ENCODE measurements at regions of chr1 and their contacts with region 1.

Region 1: DNA sequence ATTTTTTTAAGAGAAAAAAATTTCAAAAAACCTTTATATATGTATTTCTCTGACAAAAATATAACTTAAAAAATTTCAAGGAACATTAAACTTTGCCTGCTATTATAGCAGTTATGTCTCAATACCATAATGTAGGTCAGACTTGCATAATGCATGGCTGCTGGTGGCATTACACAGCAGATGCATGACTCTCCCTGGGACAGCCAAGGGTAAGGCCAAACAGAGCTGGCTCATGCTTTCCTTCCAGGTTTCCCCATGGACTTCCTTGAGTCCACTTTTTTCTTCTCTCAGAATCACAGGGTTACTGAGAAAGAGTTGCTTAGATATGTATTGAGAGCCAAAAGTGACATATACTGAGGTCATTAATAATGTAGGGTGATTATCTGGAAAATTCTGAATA is 43.7 kb downstream of the RHOU start:
- DNase-seq: no peak
- H3K4me3 ChIP-seq: no peak overlapping the region
- H3K27ac ChIP-seq: no peak overlapping the region
- H3K4me1 ChIP-seq: peaks cover 5 to 10% (median 10%) of the 10 kb centered on the region in 4 donors
- H3K27me3 ChIP-seq: no peaks in the 10 kb centered on the region
- CTCF ChIP-seq: no peak
- EP300 ChIP-seq: no peak
- POLR2A ChIP-seq: no peak

Region 2: DNA sequence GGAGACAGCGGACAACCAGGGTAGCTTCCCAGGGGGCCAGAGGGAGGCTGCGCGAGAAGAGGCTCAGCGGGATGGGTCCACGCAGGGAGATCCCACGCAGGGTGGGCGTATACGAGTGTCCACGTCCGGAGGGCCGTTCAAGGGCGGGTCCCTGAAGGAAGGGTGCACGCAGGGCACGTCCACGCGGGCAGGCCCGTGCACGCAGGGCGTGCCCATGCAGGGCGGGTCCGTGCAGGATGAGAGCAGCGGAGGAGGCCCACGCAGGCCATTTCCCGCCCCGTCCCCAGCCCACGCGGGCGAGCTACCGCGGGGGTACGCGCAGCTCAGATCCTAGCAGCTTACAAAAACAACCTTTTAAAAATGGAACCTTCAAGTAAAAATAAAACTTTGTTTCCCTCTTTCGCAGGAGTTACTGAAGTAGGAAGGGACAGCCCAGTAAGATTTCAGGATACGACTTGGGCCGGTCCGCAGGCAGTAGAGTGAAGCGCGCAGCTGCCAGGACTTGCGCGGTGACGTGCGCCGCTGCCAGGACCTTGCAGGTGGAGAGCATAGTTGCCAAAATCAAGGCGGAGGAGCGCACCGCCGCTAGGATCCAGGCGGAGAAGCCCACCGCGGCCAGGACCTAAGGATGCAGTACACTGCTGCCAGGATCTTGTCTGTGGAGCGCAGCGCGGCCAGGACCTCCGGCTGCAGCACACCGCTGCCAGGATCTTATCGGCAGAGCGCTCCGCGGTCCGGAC is 292.2 kb before region 1 on chr1:
- in situ Hi-C with region 1: no loop called
- intact Hi-C with region 1: no loop called
- DNase-seq: peak; percentile 67
- H3K4me3 ChIP-seq: peak overlapping the region; percentile 69 to 97 (median 77)
- H3K27ac ChIP-seq: peak overlapping the region; percentile 91 to 97 (median 96)
- H3K4me1 ChIP-seq: peaks cover 7 to 37% (median 19%) of the 10 kb centered on the region in 4 donors
- H3K27me3 ChIP-seq: no peaks in the 10 kb centered on the region
- CTCF ChIP-seq: no peak
- EP300 ChIP-seq: no peak
- POLR2A ChIP-seq: peak; percentile 60

Region 3: DNA sequence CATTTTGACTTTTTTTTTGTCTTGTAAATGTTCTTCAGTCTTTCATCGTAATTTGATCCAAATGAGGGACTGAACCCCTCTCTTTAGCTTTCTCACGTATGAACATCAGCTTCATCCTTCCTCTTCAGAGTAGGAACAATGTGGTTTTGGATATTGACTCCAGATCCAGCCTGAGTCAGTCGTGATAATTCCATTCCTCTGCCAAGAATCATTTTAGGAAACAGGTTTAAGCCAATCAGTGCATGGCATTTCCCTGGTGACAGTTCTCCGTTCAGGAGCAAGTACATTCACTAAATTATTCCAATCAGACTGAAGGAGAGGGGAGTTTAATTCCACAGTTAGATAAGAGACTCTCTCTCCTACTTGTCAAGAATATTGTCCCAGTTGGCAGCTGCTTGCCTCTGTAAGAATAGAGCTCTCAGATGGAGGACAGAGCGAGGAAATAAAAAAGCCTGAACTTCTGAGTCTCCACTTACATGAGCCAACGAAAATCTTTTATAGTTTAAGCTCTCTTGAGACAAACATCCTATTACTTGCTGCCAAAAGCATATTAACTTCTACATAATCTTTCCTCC is 25.1 kb before region 1 on chr1:
- in situ Hi-C with region 1: no loop called
- intact Hi-C with region 1: loop called (anchors 1 kb)
- DNase-seq: no peak
- H3K4me3 ChIP-seq: no peak overlapping the region
- H3K27ac ChIP-seq: no peak overlapping the region
- H3K4me1 ChIP-seq: no peaks in the 10 kb centered on the region
- H3K27me3 ChIP-seq: peaks cover 9% of the 10 kb centered on the region
- CTCF ChIP-seq: no peak
- EP300 ChIP-seq: no peak
- POLR2A ChIP-seq: no peak

Measured in transverse colon (tissue), 4 donors.